ENCODE measurements at regions of chr4 and their contacts with region 1.

Region 1: GRCh38 chr4:14856076-14856933 is 146.0 kb upstream of the CPEB2 start:
- DNase-seq: peak; percentile 89
- H3K4me3 Mint-ChIP-seq: no peak overlapping the region
- H3K27ac Mint-ChIP-seq: peak overlapping the region; percentile 79
- H3K4me1 Mint-ChIP-seq: peaks cover 27% of the 10 kb centered on the region
- H3K27me3 Mint-ChIP-seq: peaks cover 4% of the 10 kb centered on the region

Region 2: GRCh38 chr4:14783011-14783877 is 73.1 kb before region 1 on chr4:
- CTCF ChIA-PET with region 1: interaction called, 3 read pairs
- POLR2A ChIA-PET with region 1: interaction called, 13 read pairs
- intact Hi-C with region 1: loop called (anchors 1 kb)
- DNase-seq: peak; percentile 82
- H3K4me3 Mint-ChIP-seq: no peak overlapping the region
- H3K27ac Mint-ChIP-seq: peak overlapping the region; percentile 77
- H3K4me1 Mint-ChIP-seq: peaks cover 22% of the 10 kb centered on the region
- H3K27me3 Mint-ChIP-seq: peaks cover 7% of the 10 kb centered on the region

Region 3: DNA sequence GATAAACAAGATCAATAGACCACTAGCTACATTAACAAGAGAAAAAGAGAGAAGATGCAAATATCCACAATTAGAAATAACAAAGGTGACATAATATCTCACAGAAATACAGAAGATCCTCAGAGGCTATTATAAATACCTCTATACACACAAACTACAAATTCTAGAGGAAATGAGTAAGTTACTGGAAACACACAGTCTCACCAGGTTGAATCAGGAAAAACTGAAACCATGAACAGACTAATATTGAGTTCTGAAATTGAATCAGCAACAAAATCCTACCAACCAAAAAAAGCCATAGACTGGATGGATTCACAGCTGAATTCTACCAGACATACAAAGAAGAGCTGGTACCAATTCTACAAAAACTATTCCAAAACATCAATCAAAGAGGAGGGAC is 65.8 kb before region 1 on chr4:
- CTCF ChIA-PET with region 1: interaction called, 3 read pairs
- POLR2A ChIA-PET with region 1: interaction called, 3 read pairs
- intact Hi-C with region 1: loop called (anchors 1 kb)
- DNase-seq: no peak
- H3K4me3 Mint-ChIP-seq: no peak overlapping the region
- H3K27ac Mint-ChIP-seq: no peak overlapping the region
- H3K4me1 Mint-ChIP-seq: peaks cover 30% of the 10 kb centered on the region
- H3K27me3 Mint-ChIP-seq: peaks cover 18% of the 10 kb centered on the region

Region 4: GRCh38 chr4:14841801-14842768 is 14.2 kb before region 1 on chr4:
- CTCF ChIA-PET with region 1: no interaction called
- POLR2A ChIA-PET with region 1: interaction called, 3 read pairs
- intact Hi-C with region 1: loop called (anchors 1 kb)
- DNase-seq: no peak
- H3K4me3 Mint-ChIP-seq: no peak overlapping the region
- H3K27ac Mint-ChIP-seq: no peak overlapping the region
- H3K4me1 Mint-ChIP-seq: peaks cover 15% of the 10 kb centered on the region
- H3K27me3 Mint-ChIP-seq: peaks cover 1% of the 10 kb centered on the region

Region 5: DNA sequence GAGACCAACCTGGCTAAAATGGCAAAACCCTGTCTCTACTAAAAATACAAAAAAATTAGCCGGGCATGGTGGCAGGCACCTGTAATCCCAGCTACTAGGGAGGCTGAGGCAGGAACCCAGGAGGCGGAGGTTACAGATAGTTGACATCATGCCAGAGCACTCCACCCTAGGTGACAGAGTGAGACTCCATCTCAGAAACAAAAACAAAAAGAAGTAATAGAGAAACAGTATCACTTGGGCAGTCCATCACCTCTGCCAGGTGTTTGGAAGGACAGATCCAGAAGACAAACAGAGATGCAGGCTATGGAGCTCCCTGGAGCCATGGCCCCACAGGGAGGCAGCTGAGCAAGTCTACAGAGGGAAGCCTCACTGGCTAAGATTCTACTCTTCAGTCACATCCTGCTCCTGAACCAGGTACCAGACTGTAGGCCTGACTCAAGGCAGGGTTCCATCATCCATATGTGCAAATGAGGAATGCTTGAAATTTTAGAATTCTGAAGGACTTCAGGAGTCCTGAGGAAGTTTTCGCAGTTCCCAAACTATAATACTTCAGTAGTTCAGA is 64.5 kb after region 1 on chr4:
- CTCF ChIA-PET with region 1: no interaction called
- POLR2A ChIA-PET with region 1: interaction called, 4 read pairs
- intact Hi-C with region 1: loop called (anchors 5 kb)
- DNase-seq: peak; percentile 44
- H3K4me3 Mint-ChIP-seq: no peak overlapping the region
- H3K27ac Mint-ChIP-seq: no peak overlapping the region
- H3K4me1 Mint-ChIP-seq: no peaks in the 10 kb centered on the region
- H3K27me3 Mint-ChIP-seq: peaks cover 6% of the 10 kb centered on the region

Region 6: GRCh38 chr4:15182600-15183220 is 326.4 kb after region 1 on chr4:
- CTCF ChIA-PET with region 1: no interaction called
- POLR2A ChIA-PET with region 1: no interaction called
- intact Hi-C with region 1: loop called (anchors 2 kb)
- DNase-seq: peak; percentile 44
- H3K4me3 Mint-ChIP-seq: peak overlapping the region; percentile 35
- H3K27ac Mint-ChIP-seq: peak overlapping the region; percentile 64
- H3K4me1 Mint-ChIP-seq: peaks cover 24% of the 10 kb centered on the region
- H3K27me3 Mint-ChIP-seq: no peaks in the 10 kb centered on the region

Region 7: GRCh38 chr4:15649914-15650545 is 793.7 kb after region 1 on chr4:
- CTCF ChIA-PET with region 1: no interaction called
- POLR2A ChIA-PET with region 1: no interaction called
- intact Hi-C with region 1: loop called (anchors 5 kb)
- DNase-seq: peak; percentile 65
- H3K4me3 Mint-ChIP-seq: no peak overlapping the region
- H3K27ac Mint-ChIP-seq: peak overlapping the region; percentile 55
- H3K4me1 Mint-ChIP-seq: peaks cover 59% of the 10 kb centered on the region
- H3K27me3 Mint-ChIP-seq: no peaks in the 10 kb centered on the region